Activated CD4-positive, alpha-beta T cell treated with anti-CD3 and anti-CD28 coated beads for 36 hours (primary cell): ENCODE measurements at regions of chr12 and their contacts with region 1.

Region 1: DNA sequence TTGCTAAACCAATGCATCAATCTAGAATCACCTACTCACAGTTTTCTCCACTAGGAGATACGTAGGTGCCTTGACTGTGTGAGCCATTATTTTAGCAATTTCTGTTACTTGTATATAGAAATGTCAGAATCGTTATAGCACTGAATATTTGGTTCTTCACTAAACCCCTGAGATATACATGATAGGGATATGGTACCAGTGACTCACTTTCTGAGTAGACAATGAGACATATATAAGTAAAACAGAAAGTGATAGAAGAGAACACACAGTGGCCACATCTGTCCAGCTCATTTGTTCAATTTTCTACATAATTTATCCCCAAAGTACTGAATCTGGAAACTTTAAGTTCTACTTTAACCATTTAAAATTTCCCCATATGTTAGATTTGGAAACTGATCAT is 1505.5 kb upstream of the TMEM132C start:
- DNase-seq: no peak
- ATAC-seq: peak; percentile 88
- H3K4me3 Mint-ChIP-seq: no peak overlapping the region
- H3K27ac Mint-ChIP-seq: peak overlapping the region; percentile 82
- H3K4me1 Mint-ChIP-seq: peaks cover 30% of the 10 kb centered on the region
- H3K27me3 Mint-ChIP-seq: no peaks in the 10 kb centered on the region

Region 2: GRCh38 chr12:126708492-126708896 is 52.9 kb before region 1 on chr12:
- CTCF ChIA-PET with region 1: no interaction called
- POLR2A ChIA-PET with region 1: no interaction called
- intact Hi-C with region 1: loop called in 1 of 2 experiments (anchors 5 kb)
- DNase-seq: peak; percentile 44
- ATAC-seq: peak; percentile 95
- H3K4me3 Mint-ChIP-seq: no peak overlapping the region
- H3K27ac Mint-ChIP-seq: no peak overlapping the region
- H3K4me1 Mint-ChIP-seq: peaks cover 9% of the 10 kb centered on the region
- H3K27me3 Mint-ChIP-seq: peaks cover 4% of the 10 kb centered on the region